ENCODE measurements at regions of chr3 and their contacts with region 1.

Region 1: GRCh38 chr3:170614214-170614966 is 28.5 kb upstream of the SLC7A14 start:
- DNase-seq: peak; percentile 57
- H3K4me3 ChIP-seq: no peak overlapping the region
- CTCF ChIP-seq: no peak

Region 2: GRCh38 chr3:170699158-170700053 is 85.0 kb after region 1 on chr3:
- in situ Hi-C with region 1: loop called (anchors 5 kb)
- DNase-seq: no peak
- H3K4me3 ChIP-seq: no peak overlapping the region
- CTCF ChIP-seq: no peak